Activated CD4-positive, alpha-beta T cell treated with anti-CD3 and anti-CD28 coated beads for 36 hours (primary cell): ENCODE measurements at regions of chr6 and their contacts with region 1.

Region 1: DNA sequence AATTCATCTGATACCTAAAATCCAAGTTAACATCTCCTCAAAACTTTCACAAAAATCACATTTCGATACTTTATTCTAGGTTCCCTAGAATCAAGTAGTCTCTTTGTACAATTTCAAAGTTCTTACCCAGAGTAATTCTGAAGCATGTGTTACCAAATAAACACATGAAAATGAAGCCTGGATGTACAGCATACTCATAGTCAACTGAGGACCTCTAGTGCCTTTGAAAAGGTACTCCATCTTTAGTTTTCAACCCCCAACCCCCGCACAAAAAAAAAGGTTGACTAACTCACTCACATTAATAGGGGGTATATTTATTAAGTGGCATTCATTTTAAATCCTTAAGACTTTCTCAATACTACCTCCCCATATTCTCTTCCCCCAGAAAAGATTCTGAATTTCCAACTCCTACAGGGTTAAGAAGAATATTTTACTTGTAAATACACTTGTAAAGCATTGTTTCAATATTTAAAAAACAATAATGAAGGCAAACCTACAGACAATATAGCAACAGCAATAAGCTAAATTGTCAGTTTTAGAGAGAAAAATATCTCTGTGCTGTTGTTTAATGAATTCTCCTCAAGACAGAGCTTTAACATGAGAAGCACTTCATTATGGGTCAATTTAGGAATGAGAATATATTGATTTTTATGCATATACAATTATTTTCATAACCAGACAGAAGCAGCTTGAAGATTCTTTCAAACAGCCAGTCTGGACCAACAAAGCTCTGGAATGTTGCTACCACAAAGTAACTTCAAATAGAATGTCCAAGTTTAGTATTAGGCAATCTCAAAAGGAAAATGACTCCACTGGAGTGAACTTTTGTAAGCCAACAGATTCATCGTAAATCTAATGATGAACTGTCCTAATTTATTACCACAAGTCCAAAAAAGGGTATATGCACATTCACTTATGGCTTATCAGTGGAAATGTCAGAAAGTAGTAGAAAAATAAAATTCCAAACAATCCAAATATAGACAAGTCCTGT is 3.3 kb downstream of the PLN start:
- DNase-seq: no peak
- ATAC-seq: peak; percentile 79
- H3K4me3 Mint-ChIP-seq: no peak overlapping the region
- H3K27ac Mint-ChIP-seq: peak overlapping the region; percentile 45
- H3K4me1 Mint-ChIP-seq: peaks cover 24% of the 10 kb centered on the region
- H3K27me3 Mint-ChIP-seq: no peaks in the 10 kb centered on the region

Region 2: GRCh38 chr6:117840541-117840983 is 710.8 kb before region 1 on chr6:
- CTCF ChIA-PET with region 1: no interaction called
- POLR2A ChIA-PET with region 1: no interaction called
- intact Hi-C with region 1: loop called in 1 of 2 experiments (anchors 5 kb)
- DNase-seq: no peak
- ATAC-seq: no peak
- H3K4me3 Mint-ChIP-seq: no peak overlapping the region
- H3K27ac Mint-ChIP-seq: no peak overlapping the region
- H3K4me1 Mint-ChIP-seq: no peaks in the 10 kb centered on the region
- H3K27me3 Mint-ChIP-seq: no peaks in the 10 kb centered on the region

Region 3: DNA sequence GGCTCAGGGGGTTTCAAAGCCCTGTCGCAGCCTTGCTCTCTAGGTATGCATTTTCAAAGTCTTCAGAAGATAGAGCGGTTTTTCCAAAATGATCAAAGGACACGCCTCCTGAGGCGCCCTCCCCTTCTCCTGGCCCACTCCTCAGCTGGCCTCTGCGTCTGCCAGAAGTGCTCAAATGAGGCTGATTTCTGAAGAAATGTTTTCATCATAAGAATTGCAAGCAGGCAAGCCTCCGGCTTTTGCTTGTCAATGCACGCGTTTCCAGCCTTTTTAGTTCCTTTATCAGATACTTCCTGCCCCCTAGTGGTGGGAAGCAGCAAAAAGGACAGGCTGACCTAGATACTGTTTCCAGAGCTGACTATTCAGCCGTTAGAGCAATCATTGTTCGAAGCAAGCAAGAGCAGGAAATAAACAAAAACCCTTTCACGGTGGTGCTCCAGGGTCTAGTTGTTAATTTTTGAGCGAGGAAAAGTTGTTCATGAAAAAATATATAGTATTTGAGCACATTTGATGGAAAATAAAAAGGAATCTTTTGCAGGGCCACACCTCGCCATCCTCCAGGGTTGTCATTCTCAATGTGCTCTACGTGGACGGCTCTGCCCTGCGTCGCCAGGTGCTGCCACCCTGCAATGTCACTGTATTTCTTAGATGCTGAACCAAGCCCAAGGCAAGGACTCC is 249.2 kb after region 1 on chr6:
- CTCF ChIA-PET with region 1: interaction called, 4 read pairs
- POLR2A ChIA-PET with region 1: interaction called, 4 read pairs
- intact Hi-C with region 1: loop called in 1 of 2 experiments (anchors 5 kb)
- DNase-seq: peak; percentile 89
- ATAC-seq: peak; percentile 96
- H3K4me3 Mint-ChIP-seq: no peak overlapping the region
- H3K27ac Mint-ChIP-seq: peak overlapping the region; percentile 7
- H3K4me1 Mint-ChIP-seq: peaks cover 28% of the 10 kb centered on the region
- H3K27me3 Mint-ChIP-seq: no peaks in the 10 kb centered on the region